GM12878 (cell line): ENCODE measurements at regions of chr12 and their contacts with region 1.

Region 1: GRCh38 chr12:98259693-98260092 is 255.7 kb upstream of the TMPO start:
- DNase-seq: peak; percentile 38
- ATAC-seq: peak; percentile 79
- H3K4me3 ChIP-seq: no peak overlapping the region
- H3K27ac ChIP-seq: no peak overlapping the region; the same call in 1 of the 2 replicates
- H3K4me1 ChIP-seq: no peaks in the 10 kb centered on the region
- H3K27me3 ChIP-seq: no peaks in the 10 kb centered on the region
- CTCF ChIP-seq: no peak
- EP300 ChIP-seq: no peak
- POLR2A ChIP-seq: no peak
- RAD21 ChIP-seq: no peak

Region 2: DNA sequence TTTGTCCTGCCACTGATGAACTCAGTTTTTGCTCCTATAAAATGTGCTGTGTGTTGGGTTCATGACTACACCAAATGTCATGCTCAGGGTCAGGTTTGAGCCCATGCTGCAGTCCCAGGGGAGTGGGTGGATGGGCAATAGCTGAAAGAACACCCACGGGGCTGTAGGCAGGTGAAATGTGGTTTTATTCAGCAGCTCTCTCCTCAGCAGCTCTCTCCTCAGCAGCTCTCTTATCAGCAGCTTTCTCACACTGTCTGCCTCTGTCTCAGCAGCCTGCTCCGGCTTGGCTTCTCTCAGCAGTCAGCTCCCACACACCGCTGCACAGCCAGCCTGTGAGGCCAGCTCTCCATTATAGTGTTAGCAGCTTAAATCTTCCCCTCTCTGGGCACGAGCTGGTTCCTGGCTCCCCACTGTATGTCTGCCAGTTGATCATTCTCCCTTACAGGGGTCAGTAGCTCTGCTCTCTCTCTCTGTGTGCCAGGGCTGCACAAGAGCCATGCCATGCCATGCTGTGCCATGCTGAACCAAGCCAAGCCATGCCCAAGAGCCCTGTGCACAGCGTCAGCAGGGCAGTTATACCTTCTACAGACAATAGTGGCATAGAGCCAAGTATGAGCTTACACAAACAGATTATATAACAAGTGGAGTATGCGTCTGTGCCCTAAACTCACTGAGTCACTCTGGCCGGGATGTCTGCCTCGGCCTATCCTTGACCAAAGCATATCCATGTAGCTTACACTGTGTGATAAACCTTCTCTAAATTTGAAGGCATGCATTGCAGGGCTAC is 47.6 kb before region 1 on chr12:
- CTCF ChIA-PET with region 1: interaction called, 4 read pairs
- POLR2A ChIA-PET with region 1: no interaction called
- RAD21 ChIA-PET with region 1: interaction called, 13 read pairs
- SMC1A ChIA-PET with region 1: interaction called, 3 read pairs
- in situ Hi-C with region 1: no loop called
- intact Hi-C with region 1: no loop called
- DNase-seq: no peak
- ATAC-seq: peak; percentile 84
- H3K4me3 ChIP-seq: no peak overlapping the region
- H3K27ac ChIP-seq: no peak overlapping the region
- H3K4me1 ChIP-seq: no peaks in the 10 kb centered on the region
- H3K27me3 ChIP-seq: no peaks in the 10 kb centered on the region; a peak in 1 of 4 replicates
- CTCF ChIP-seq: no peak
- EP300 ChIP-seq: peak; percentile 9 to 18; a peak in 1 of 4 replicates
- POLR2A ChIP-seq: no peak
- RAD21 ChIP-seq: no peak

Region 3: DNA sequence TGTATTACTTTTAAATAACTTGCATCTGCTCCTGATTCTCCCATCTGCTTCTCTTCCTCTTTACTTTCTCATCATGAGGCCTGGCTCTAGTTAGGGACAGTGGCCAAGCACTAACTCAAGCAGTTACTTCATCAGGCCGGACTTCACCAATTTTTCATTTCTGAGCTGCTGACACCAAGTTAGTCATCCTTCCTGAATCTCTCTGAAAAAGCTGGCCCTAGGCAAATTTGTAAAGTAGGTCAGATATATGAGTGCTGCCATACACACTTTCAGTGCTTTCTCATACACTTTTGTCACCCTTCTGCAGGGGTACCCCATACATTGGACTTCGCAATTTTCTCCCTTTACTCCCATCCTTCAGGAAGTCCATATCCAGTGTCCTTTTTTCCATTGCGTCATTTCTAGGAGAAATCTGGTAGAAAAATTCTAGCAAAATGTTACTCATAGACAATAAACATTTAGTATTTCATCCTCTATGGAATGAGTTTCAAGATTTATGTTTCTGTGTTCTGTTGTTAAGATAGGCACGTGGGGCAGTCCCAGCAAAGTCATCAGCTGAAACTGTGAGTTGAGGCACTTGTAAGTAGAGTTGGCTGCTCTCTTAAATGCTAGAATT is 21.1 kb before region 1 on chr12:
- CTCF ChIA-PET with region 1: no interaction called
- POLR2A ChIA-PET with region 1: interaction called, 3 read pairs
- RAD21 ChIA-PET with region 1: interaction called, 3 read pairs
- SMC1A ChIA-PET with region 1: interaction called, 26 read pairs
- in situ Hi-C with region 1: no loop called
- intact Hi-C with region 1: loop called (anchors 2 kb)
- DNase-seq: no peak
- ATAC-seq: peak; percentile 47
- H3K4me3 ChIP-seq: no peak overlapping the region
- H3K27ac ChIP-seq: no peak overlapping the region
- H3K4me1 ChIP-seq: no peaks in the 10 kb centered on the region
- H3K27me3 ChIP-seq: no peaks in the 10 kb centered on the region; a peak in 1 of 4 replicates
- CTCF ChIP-seq: no peak
- EP300 ChIP-seq: no peak
- POLR2A ChIP-seq: no peak
- RAD21 ChIP-seq: no peak

Region 4: GRCh38 chr12:98274430-98275130 is 14.9 kb after region 1 on chr12:
- CTCF ChIA-PET with region 1: interaction called, 20 read pairs
- POLR2A ChIA-PET with region 1: interaction called, 18 read pairs
- RAD21 ChIA-PET with region 1: interaction called, 40 read pairs
- SMC1A ChIA-PET with region 1: interaction called, 65 read pairs
- in situ Hi-C with region 1: no loop called
- intact Hi-C with region 1: no loop called
- DNase-seq: peak; percentile 71
- ATAC-seq: peak; percentile 90
- H3K4me3 ChIP-seq: peak overlapping the region; percentile 18; the same call in 1 of the 2 replicates
- H3K27ac ChIP-seq: peak overlapping the region; percentile 50; the same call in 1 of the 2 replicates
- H3K4me1 ChIP-seq: peaks cover 15% of the 10 kb centered on the region
- H3K27me3 ChIP-seq: no peaks in the 10 kb centered on the region
- CTCF ChIP-seq: no peak
- EP300 ChIP-seq: peak; percentile 74 to 96; a peak in 3 of 4 replicates
- POLR2A ChIP-seq: no peak
- RAD21 ChIP-seq: no peak